ENCODE measurements at regions of chr15 and their contacts with region 1.

Region 1: GRCh38 chr15:53197426-53197839 is 407.3 kb upstream of the ONECUT1 start:
- DNase-seq: peak; percentile 81 to 86 (median 85)
- ATAC-seq: peak; percentile 96 to 100 (median 100)
- H3K4me3 ChIP-seq: peak overlapping the region; percentile 10 to 41 (median 29)
- H3K27ac ChIP-seq: peak overlapping the region in 2 of 3 donors; percentile 22 to 34
- H3K4me1 ChIP-seq: peaks cover 0 to 5% (median 3%) of the 10 kb centered on the region in 4 donors
- H3K27me3 ChIP-seq: no peaks in the 10 kb centered on the region
- CTCF ChIP-seq: peak; percentile 86 to 96 (median 94)
- POLR2A ChIP-seq: no peak

Region 2: DNA sequence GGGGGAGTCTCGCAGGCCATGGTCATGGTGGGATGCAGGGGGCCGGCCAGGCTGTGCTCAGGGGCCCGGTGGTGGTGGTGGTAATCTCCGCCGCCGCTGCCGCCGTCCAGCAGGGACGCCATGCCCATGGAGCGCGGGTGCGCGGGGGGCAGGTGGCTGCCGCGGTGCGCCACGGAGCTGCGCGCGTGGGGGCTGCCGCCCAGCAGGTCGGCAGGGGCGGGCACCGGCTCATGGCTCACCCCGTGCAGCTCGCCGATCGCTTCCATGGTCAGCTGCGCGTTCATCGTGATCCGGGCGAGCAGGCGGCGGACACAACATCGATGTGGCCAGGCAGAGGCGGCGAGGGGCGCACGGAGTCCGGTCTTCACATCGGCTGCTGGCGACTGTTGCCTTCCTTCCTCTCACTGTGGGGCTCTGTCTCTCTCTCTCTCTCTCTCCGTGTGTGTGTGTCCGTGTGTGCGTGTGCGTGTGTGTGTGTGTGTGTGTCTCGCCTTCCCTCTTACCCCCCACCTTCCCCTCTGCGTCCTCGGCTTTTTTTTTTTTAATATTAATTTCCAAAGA is 407.8 kb before region 1 on chr15:
- intact Hi-C with region 1: loop called in 1 of 2 experiments (anchors 5 kb)
- DNase-seq: peak; percentile 46 to 65 (median 64)
- ATAC-seq: peak in 2 of 4 donors; percentile 6 to 16
- H3K4me3 ChIP-seq: peak overlapping the region; percentile 66 to 82 (median 81)
- H3K27ac ChIP-seq: peak overlapping the region; percentile 83 to 98 (median 83)
- H3K4me1 ChIP-seq: no peaks in the 10 kb centered on the region
- H3K27me3 ChIP-seq: no peaks in the 10 kb centered on the region
- CTCF ChIP-seq: no peak
- POLR2A ChIP-seq: no peak

Region 3: DNA sequence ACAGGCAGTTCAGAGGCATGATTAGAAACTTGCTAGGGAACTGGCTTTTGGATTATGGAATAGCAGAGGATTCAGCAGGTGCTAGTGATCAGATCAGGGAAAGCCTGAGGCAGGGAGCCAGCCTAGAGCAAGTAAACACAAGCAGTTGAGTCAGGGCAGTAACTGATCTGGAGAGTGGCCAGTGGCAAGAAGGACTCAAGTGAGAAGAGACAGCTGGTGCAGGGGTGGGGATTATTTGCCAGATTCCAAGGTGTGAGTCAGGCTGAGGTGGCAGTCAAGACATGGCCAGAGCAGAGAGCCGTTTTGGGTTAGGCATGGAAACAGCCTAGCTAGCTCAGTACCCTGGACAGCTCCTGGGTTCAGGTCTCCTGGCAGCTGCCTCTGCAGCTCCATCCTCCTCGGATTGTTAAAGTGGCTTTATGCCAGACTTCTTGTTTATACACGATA is 125.4 kb before region 1 on chr15:
- intact Hi-C with region 1: loop called in 1 of 2 experiments (anchors 10 kb)
- DNase-seq: peak; percentile 68 to 80 (median 73)
- ATAC-seq: peak; percentile 95 to 99 (median 96)
- H3K4me3 ChIP-seq: no peak overlapping the region
- H3K27ac ChIP-seq: no peak overlapping the region
- H3K4me1 ChIP-seq: peaks cover 0 to 8% (median 0%) of the 10 kb centered on the region in 4 donors
- H3K27me3 ChIP-seq: no peaks in the 10 kb centered on the region
- CTCF ChIP-seq: no peak
- POLR2A ChIP-seq: no peak

Region 4: GRCh38 chr15:53114960-53115359 is 82.5 kb before region 1 on chr15:
- intact Hi-C with region 1: no loop called
- DNase-seq: no peak
- ATAC-seq: peak; percentile 49 to 93 (median 72)
- H3K4me3 ChIP-seq: no peak overlapping the region
- H3K27ac ChIP-seq: no peak overlapping the region
- H3K4me1 ChIP-seq: peaks cover 0 to 5% (median 0%) of the 10 kb centered on the region in 4 donors
- H3K27me3 ChIP-seq: no peaks in the 10 kb centered on the region
- CTCF ChIP-seq: no peak
- POLR2A ChIP-seq: no peak

Measured in right lobe of liver (tissue), 6 donors.